Psoas muscle (tissue), 8 donors: ENCODE measurements at regions of chr9 and their contacts with region 1.

Region 1: GRCh38 chr9:127308652-127309429 is 44.3 kb downstream of the GARNL3 start:
- DNase-seq: no peak
- ATAC-seq: peak in 1 of 4 donors; percentile 46
- H3K4me3 ChIP-seq: no peak overlapping the region
- H3K27ac ChIP-seq: no peak overlapping the region
- H3K4me1 ChIP-seq: peaks cover 36% of the 10 kb centered on the region
- H3K27me3 ChIP-seq: no peaks in the 10 kb centered on the region
- CTCF ChIP-seq: no peak

Region 2: GRCh38 chr9:127360829-127361228 is 52.0 kb after region 1 on chr9:
- intact Hi-C with region 1: loop called in 1 of 2 experiments (anchors 5 kb)
- DNase-seq: no peak
- ATAC-seq: peak in 2 of 4 donors; percentile 38 to 58
- H3K4me3 ChIP-seq: no peak overlapping the region
- H3K27ac ChIP-seq: peak overlapping the region; percentile 0
- H3K4me1 ChIP-seq: peaks cover 8% of the 10 kb centered on the region
- H3K27me3 ChIP-seq: no peaks in the 10 kb centered on the region
- CTCF ChIP-seq: no peak